PC-3 (cell line): ENCODE measurements at regions of chr11 and their contacts with region 1.

Region 1: DNA sequence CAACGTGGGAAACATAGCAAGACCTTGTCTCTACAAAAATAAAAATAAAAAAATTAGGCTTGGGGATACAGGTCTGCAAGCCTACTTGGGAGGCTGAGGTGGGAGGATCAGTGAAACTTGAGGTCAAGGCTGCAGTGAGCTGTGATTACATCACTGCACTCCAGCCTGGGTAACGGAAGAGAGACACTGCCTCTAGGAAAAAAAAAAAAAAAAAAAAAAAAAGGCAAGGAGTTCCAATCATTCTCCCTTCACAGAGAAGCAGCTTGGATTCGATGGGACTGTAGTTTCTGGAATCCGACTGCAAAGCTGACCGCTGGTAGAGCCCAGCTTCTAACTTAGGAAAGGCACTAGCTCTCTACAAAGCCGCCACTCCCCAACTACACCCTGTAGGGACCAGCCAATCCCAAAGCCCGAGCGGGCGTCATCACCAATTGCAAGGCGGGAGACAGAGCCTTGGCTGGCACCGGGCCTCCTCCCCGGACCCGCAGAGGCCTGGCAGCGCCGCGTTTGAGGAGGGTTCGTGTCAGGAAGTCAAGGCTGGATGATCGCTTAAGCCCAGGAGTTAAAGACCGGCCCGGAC is 699 bp upstream of the DDB2 start:
- DNase-seq: peak; percentile 91
- ATAC-seq: peak; percentile 78
- H3K4me3 ChIP-seq: peak overlapping the region; percentile 77
- H3K27ac ChIP-seq: peak overlapping the region; percentile 83
- H3K4me1 ChIP-seq: peaks cover 25% of the 10 kb centered on the region
- H3K27me3 ChIP-seq: no peaks in the 10 kb centered on the region
- CTCF ChIP-seq: no peak

Region 2: DNA sequence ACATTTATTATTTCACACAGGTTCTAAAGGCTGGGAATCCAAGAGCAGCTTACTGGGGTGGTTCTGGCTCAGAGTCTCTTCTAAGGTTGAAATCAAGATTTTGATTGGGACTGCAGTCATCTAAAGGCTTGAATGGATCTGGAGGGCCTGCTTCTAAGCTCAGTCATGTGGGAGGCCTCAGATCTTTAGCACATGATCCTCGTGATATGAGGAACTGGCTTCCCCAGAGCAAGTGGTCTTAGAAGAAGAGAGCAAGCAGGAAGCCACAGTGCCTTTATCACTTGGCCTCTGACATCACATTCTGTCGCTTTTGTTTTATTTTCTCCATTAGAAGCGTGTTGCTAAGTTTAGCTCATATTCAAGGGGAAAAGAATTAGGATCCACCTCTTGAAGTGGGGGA is 126.3 kb before region 1 on chr11:
- CTCF ChIA-PET with region 1: no interaction called
- POLR2A ChIA-PET with region 1: no interaction called
- intact Hi-C with region 1: no loop called
- DNase-seq: no peak
- ATAC-seq: no peak
- H3K4me3 ChIP-seq: no peak overlapping the region
- H3K27ac ChIP-seq: no peak overlapping the region
- H3K4me1 ChIP-seq: peaks cover 6% of the 10 kb centered on the region
- H3K27me3 ChIP-seq: no peaks in the 10 kb centered on the region
- CTCF ChIP-seq: no peak

Region 3: GRCh38 chr11:47225552-47226400 is 11.7 kb after region 1 on chr11:
- CTCF ChIA-PET with region 1: no interaction called
- POLR2A ChIA-PET with region 1: interaction called, 21 read pairs
- intact Hi-C with region 1: no loop called
- DNase-seq: no peak
- ATAC-seq: 0 out of 2 replicates have a peak, but pooled peaks have one; percentile 29
- H3K4me3 ChIP-seq: no peak overlapping the region
- H3K27ac ChIP-seq: no peak overlapping the region
- H3K4me1 ChIP-seq: no peaks in the 10 kb centered on the region; the same call in 1 of the 2 replicates
- H3K27me3 ChIP-seq: no peaks in the 10 kb centered on the region
- CTCF ChIP-seq: no peak

Region 4: DNA sequence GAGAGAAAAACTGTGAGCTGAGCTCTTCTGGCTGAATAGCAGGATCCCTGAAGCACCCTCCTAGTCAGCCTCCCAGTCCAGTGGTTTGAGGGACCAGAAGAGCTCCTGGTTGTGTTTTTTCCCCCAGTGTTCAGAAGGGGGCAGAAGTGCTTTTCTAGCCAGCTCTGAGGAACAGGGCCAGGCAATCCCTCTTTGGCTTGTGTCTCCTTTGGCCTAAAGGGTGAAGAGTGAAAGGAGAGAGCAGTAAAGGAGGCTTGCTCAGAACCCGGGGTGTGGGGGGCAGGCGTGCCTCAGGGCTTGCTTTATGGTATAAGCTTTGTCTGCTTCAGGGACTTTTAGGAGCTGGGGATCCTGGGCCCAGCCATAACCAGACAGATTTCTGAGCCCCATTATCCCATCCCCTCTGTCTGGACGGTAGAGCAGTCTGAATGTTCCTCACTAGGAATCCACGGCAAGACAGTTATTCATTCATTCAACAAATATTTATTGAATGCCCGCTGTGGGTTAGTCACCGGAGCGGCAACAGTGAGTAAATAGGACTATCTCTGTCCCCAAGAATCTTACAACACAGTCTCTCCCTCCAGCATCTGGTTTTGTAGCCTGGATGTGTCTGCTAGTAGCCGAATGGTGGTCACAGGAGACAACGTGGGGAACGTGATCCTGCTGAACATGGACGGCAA is 20.1 kb after region 1 on chr11:
- CTCF ChIA-PET with region 1: interaction called, 10 read pairs
- POLR2A ChIA-PET with region 1: interaction called, 27 read pairs
- intact Hi-C with region 1: loop called (anchors 1 kb)
- DNase-seq: peak; percentile 87
- ATAC-seq: peak; percentile 77
- H3K4me3 ChIP-seq: peak overlapping the region; percentile 63
- H3K27ac ChIP-seq: peak overlapping the region; percentile 91
- H3K4me1 ChIP-seq: peaks cover 43% of the 10 kb centered on the region
- H3K27me3 ChIP-seq: no peaks in the 10 kb centered on the region
- CTCF ChIP-seq: peak; percentile 58

Region 5: GRCh38 chr11:47259178-47259977 is 45.3 kb after region 1 on chr11:
- CTCF ChIA-PET with region 1: interaction called, 7 read pairs
- POLR2A ChIA-PET with region 1: interaction called, 3 read pairs
- intact Hi-C with region 1: loop called (anchors 5 kb)
- DNase-seq: peak; percentile 82
- ATAC-seq: peak; percentile 96
- H3K4me3 ChIP-seq: peak overlapping the region; percentile 26; the same call in 1 of the 2 replicates
- H3K27ac ChIP-seq: peak overlapping the region; percentile 46
- H3K4me1 ChIP-seq: peaks cover 37% of the 10 kb centered on the region
- H3K27me3 ChIP-seq: no peaks in the 10 kb centered on the region
- CTCF ChIP-seq: peak; percentile 86

Region 6: GRCh38 chr11:47413351-47413750 is 199.3 kb after region 1 on chr11:
- CTCF ChIA-PET with region 1: no interaction called
- POLR2A ChIA-PET with region 1: interaction called, 12 read pairs
- intact Hi-C with region 1: no loop called
- DNase-seq: no peak
- ATAC-seq: no peak
- H3K4me3 ChIP-seq: no peak overlapping the region
- H3K27ac ChIP-seq: no peak overlapping the region
- H3K4me1 ChIP-seq: peaks cover 35% of the 10 kb centered on the region
- H3K27me3 ChIP-seq: no peaks in the 10 kb centered on the region
- CTCF ChIP-seq: no peak

Region 7: DNA sequence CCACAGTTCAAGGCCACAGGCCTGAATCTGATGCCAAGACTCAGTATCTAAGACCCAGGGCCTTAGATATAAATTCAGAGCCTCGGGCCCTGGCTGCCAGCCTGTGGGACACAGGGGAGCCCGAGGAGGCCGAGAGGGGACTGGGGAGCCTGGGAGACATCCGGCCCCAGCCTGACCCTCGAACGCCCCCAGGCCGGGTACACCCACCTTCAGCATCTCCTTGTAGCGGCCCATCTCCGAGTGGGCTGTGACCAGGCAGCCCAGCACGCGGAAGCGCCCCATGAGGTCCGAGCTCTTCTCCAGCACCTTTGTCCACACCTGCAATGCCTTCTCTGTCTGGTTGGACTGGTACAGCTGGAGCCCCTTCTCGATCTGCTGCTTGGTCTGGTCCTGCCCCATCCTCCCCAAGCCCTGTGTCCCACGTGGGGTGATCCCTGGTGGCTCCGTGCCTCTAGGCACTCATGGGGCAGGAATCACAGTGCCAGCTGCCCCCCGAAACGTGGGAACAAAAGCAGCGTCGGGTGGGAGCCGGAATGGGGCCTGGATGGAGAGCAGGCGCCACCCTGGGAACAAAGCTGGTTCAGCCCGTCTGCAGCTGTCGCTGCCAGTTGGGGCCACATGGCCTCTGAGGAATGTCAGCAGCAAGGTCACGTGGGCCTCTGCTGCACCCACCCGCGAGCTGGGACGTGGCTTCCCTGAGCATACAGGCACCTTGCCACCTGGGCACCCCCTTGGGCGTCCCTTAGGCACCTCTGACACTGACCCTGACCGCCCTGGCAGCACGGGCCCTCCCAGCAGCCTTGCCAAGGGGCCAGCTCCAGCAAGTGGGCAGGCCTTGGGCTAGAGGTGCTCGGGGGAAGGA is 234.7 kb after region 1 on chr11 and contains the start of gene RAPSN:
- CTCF ChIA-PET with region 1: no interaction called
- POLR2A ChIA-PET with region 1: no interaction called
- intact Hi-C with region 1: no loop called
- DNase-seq: no peak
- ATAC-seq: no peak
- H3K4me3 ChIP-seq: no peak within 1 kb of the TSS
- H3K27ac ChIP-seq: no peak within 1 kb of the TSS
- H3K4me1 ChIP-seq: no peaks in the 10 kb centered on the region
- H3K27me3 ChIP-seq: no peaks in the 10 kb centered on the region
- CTCF ChIP-seq: no peak
- total RNA-seq, gene RAPSN: 0.23 TPM in 1 of 2 replicates, not detected in the other